ENCODE measurements at regions of chr4 and their contacts with region 1.

Region 1: DNA sequence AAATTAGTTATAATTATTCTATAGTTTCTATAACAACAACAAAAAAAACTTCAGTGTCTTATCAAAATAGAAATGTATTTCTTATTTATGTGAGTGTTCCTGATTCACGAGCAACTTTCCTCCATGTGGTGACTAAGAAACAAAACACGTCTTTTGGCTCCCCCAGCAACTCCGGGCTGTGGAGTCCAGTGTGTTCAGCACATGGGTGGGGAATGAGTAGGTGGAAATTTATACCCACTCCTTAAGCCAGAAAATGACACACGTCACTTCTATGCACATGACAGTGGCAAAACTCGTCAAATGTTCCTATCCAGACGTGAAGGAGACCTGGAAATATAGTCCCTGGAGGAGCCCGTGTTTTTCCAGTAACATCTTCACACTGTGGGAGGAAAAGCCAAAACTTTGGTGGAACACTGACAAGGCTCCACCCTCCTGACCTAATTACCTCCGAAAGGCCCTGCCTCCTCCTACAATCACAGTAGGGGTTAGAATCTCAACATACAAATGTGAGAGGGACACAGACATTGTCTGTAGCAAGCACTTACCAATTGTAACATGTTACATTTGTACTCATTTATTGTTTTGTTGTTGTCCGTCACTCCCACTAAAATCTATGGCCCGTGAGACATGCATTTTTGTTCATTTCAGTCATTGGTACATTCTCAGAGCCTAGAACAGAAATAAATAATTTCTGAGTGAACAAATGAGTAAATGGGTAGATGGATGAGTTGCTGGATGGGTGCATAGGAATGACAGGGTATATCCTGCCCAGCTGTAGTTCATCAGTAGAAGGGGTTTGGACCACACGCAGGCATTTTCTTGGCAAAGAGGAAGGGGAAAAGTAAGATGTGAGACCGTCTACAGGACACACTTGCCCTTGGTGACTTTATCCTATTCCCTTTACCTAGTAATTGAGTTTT is 605.8 kb upstream of the TENM3 start:
- DNase-seq: no peak
- H3K4me3 Mint-ChIP-seq: no peak overlapping the region
- H3K27ac Mint-ChIP-seq: no peak overlapping the region
- H3K4me1 Mint-ChIP-seq: no peaks in the 10 kb centered on the region
- H3K27me3 Mint-ChIP-seq: no peaks in the 10 kb centered on the region
- CTCF ChIP-seq: no peak

Region 2: GRCh38 chr4:181468451-181468850 is 169.0 kb before region 1 on chr4:
- CTCF ChIA-PET with region 1: no interaction called
- intact Hi-C with region 1: no loop called
- DNase-seq: no peak
- H3K4me3 Mint-ChIP-seq: no peak overlapping the region
- H3K27ac Mint-ChIP-seq: no peak overlapping the region
- H3K4me1 Mint-ChIP-seq: no peaks in the 10 kb centered on the region
- H3K27me3 Mint-ChIP-seq: no peaks in the 10 kb centered on the region
- CTCF ChIP-seq: no peak

Region 3: DNA sequence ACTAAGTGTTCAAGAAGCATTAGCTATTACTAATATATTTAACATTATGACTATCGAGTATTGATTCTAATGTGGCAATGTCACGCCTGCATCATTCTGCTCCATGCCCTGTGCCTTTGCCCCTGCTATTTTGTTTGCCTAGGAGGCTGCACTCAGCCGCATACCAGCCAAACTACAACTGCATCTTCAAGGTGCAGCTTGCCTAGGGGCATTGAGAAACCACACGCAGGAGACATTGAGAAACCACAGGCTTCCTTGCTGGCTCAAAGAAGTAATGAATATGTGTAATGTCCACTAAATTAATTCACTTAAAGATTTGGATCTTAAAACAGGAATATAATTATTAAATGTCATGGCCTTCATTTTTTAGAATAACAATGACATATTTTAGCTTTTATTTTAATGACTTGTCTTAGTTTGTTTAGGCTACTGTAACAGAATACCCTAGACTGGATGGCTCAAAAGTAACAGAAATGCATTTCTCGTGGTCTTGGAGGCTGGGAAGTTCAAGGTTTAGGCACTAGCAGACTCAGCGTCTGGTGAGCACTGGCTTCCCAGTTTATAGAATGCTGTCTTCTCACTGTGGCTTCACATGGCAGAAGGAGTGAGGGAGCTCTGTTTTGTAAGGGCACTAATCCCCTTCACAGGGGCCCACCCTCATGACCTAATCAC is 77.7 kb before region 1 on chr4:
- CTCF ChIA-PET with region 1: no interaction called
- intact Hi-C with region 1: loop called (anchors 2 kb)
- DNase-seq: no peak
- H3K4me3 Mint-ChIP-seq: no peak overlapping the region
- H3K27ac Mint-ChIP-seq: no peak overlapping the region
- H3K4me1 Mint-ChIP-seq: no peaks in the 10 kb centered on the region
- H3K27me3 Mint-ChIP-seq: no peaks in the 10 kb centered on the region
- CTCF ChIP-seq: no peak

Region 4: DNA sequence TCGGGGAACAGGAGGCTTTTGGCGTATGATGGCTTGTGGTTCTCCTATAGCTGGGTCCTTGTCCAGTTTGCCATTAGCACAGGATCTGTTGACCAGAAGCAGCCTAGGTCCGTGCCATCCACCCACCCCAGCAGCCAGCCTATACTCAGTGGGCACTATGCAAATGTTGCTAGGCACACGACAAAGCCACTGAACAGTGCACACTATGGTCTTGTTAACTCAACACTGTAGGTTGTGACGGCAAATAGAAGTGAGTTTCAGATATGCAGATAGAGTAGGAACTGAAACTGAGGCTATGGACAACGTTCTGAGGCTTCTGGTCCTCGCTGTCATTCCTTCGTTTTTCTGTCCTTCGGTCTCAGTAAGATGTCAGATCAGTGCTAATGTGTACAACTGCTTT is 64.4 kb after region 1 on chr4:
- CTCF ChIA-PET with region 1: no interaction called
- intact Hi-C with region 1: no loop called
- DNase-seq: no peak
- H3K4me3 Mint-ChIP-seq: no peak overlapping the region
- H3K27ac Mint-ChIP-seq: no peak overlapping the region
- H3K4me1 Mint-ChIP-seq: no peaks in the 10 kb centered on the region
- H3K27me3 Mint-ChIP-seq: no peaks in the 10 kb centered on the region
- CTCF ChIP-seq: no peak

Measured in Calu3 (cell line).